Mammary epithelial cell (primary cell): ENCODE measurements at regions of chr12 and their contacts with region 1.

Region 1: DNA sequence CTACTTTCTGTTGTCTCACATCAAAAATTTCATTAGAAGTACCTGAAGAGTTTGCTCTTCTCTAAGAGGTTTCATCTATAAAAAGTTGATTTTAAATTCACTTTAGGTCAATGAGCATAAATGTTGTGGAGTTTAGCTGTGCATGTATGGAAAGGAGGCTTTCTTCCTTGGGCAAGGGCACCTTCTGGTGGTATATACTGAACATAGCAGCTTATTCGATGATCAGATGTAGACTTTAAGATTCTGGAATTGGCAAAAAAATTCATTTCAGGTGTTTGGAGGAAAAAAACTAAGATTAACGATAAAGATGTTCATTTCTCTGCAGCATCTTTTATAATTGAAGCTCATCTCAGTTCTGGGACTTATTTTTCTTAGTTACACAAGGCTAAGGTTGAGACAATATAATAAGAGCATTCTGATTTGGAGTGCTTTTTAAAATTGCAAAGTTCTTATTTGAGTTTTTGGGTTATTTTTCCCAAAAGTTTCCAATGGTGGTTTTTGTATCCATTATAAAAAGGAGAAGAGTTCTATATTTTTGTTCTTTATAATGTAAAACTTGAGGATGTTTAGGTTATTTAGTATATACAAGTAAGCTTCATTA is 46.8 kb downstream of the TMEM117 start:
- DNase-seq: peak; percentile 49
- H3K4me3 ChIP-seq: no peak overlapping the region
- H3K27ac ChIP-seq: no peak overlapping the region
- H3K4me1 ChIP-seq: peaks cover 20% of the 10 kb centered on the region
- H3K27me3 ChIP-seq: no peaks in the 10 kb centered on the region
- CTCF ChIP-seq: peak; percentile 91 to 96

Region 2: GRCh38 chr12:43349863-43350262 is 532.8 kb before region 1 on chr12:
- CTCF ChIA-PET with region 1: no interaction called
- dilution Hi-C with region 1: no loop called
- in situ Hi-C with region 1: no loop called
- intact Hi-C with region 1: loop called (anchors 2 kb)
- DNase-seq: no peak
- H3K4me3 ChIP-seq: no peak overlapping the region
- H3K27ac ChIP-seq: no peak overlapping the region
- H3K4me1 ChIP-seq: no peaks in the 10 kb centered on the region
- H3K27me3 ChIP-seq: no peaks in the 10 kb centered on the region
- CTCF ChIP-seq: peak; percentile 36 to 41

Region 3: DNA sequence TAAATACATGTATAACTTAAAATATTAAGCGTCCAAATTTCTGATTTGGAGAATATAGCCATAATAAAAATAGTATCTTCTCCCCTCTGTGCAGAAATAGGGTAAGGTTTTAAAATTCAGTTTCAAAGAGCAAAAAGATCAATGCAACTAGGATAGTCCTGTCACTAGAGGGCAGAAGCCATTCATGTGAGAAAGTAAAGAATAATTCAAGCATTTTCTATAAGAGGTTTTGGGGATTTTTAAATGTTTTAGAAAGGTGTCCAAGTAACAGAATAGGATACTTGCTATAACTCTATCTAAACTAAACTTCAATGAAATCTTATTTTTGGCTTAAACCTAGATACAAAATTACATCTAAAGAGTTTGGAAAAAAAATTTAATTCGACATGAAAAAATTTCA is 381.0 kb before region 1 on chr12:
- CTCF ChIA-PET with region 1: no interaction called
- dilution Hi-C with region 1: no loop called
- in situ Hi-C with region 1: loop called in 1 of 2 experiments (anchors 25 kb)
- intact Hi-C with region 1: loop called (anchors 2 kb)
- DNase-seq: peak; percentile 11
- H3K4me3 ChIP-seq: no peak overlapping the region
- H3K27ac ChIP-seq: no peak overlapping the region
- H3K4me1 ChIP-seq: no peaks in the 10 kb centered on the region
- H3K27me3 ChIP-seq: no peaks in the 10 kb centered on the region
- CTCF ChIP-seq: peak; percentile 34 to 65

Region 4: GRCh38 chr12:43776498-43776897 is 106.2 kb before region 1 on chr12:
- CTCF ChIA-PET with region 1: interaction called, 6 read pairs
- dilution Hi-C with region 1: no loop called
- in situ Hi-C with region 1: loop called in 1 of 2 experiments (anchors 10 kb)
- intact Hi-C with region 1: loop called (anchors 1 kb)
- DNase-seq: peak; percentile 13
- H3K4me3 ChIP-seq: no peak overlapping the region
- H3K27ac ChIP-seq: no peak overlapping the region
- H3K4me1 ChIP-seq: no peaks in the 10 kb centered on the region
- H3K27me3 ChIP-seq: no peaks in the 10 kb centered on the region
- CTCF ChIP-seq: peak; percentile 55 to 62

Region 5: DNA sequence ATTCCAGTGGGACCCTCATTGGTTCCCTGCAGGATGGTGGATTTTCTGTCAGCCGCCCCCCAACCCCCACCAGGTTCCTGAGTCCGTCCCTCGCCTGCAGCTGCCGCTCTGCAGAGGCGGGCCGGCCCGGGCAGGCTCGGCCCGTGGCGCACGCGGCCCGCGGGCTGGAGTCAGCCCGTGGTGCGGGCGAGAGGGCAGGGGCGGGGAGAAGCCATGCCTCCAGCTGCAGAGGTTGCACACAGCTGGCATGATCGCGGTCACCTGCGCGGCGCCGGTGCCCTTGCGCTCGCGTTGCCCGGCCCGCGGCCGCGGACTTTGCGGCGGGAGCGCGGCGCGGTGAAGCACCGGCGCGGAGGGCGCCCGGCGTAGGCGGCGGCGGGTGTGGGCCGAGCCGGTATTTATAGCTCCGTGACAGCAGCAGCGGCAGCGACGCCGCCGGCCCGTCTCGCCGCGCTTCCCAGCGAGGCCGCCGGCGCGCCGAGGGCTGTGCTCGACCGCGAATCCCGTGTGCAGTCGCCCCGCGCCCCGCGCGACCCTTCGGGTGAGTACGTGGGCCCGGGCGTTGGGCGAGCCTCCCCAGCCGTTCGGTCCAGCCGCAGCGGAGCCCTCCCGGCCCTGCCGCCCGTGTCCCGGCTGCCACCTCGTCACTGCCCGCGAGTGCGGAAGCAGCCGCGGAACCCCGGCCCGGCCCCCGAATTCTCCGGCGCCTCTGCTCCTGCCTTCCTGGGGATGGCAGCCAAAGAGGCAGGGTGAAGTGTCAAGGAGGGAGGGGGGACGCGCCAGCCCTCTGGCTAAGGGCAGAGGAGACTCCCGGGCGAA is 46.8 kb before region 1 on chr12 and contains the start of gene TMEM117:
- CTCF ChIA-PET with region 1: no interaction called
- dilution Hi-C with region 1: no loop called
- in situ Hi-C with region 1: no loop called
- intact Hi-C with region 1: loop called (anchors 5 kb)
- DNase-seq: peak; percentile 59
- H3K4me3 ChIP-seq: peak within 1 kb of the TSS; percentile 76 to 89 (median 86)
- H3K27ac ChIP-seq: peak within 1 kb of the TSS; percentile 83
- H3K4me1 ChIP-seq: peaks cover 11% of the 10 kb centered on the region
- H3K27me3 ChIP-seq: no peaks in the 10 kb centered on the region
- CTCF ChIP-seq: no peak
- total RNA-seq, gene TMEM117: 20.8 to 26.5 TPM

Region 6: DNA sequence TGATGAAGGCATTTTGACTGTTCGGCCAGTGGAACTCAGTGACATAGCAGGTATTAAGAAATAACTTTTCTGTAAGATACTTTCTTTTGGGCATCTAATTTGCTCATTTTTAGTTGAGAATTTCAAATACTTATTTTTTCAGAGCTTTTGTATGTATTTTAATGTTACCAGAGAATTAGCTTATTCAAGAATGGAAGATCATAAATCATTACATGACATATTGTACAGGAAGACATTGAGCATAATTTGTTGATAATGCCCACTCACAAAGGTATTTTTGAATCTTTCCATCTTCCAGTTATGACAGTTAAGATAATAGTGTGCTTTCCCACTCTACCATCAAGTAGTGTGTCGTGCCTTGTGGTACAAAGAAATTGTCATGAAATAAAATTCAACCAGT is 10.3 kb before region 1 on chr12:
- CTCF ChIA-PET with region 1: no interaction called
- dilution Hi-C with region 1: no loop called
- in situ Hi-C with region 1: no loop called
- intact Hi-C with region 1: loop called (anchors 1 kb)
- DNase-seq: no peak
- H3K4me3 ChIP-seq: no peak overlapping the region
- H3K27ac ChIP-seq: no peak overlapping the region
- H3K4me1 ChIP-seq: no peaks in the 10 kb centered on the region
- H3K27me3 ChIP-seq: no peaks in the 10 kb centered on the region
- CTCF ChIP-seq: no peak

Region 7: DNA sequence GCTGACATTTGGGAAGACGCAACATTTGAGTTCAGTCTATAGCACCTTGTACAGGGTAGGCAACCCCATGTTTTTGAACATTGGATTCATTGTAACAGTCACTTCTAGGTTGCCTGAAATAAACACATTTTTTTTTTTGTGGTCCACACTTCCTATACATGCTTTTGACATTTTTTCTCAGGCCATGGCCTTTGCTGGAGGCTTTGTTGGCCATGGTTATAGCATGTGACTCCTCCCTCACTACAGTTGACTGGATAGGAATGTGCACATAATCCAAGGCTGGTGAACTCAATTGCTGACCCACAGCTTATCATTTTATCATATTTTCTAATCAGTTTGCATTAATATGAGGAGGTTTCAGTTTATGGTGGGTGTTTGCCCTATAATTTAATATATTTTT is 13.8 kb after region 1 on chr12:
- CTCF ChIA-PET with region 1: no interaction called
- dilution Hi-C with region 1: no loop called
- in situ Hi-C with region 1: no loop called
- intact Hi-C with region 1: no loop called
- DNase-seq: no peak
- H3K4me3 ChIP-seq: no peak overlapping the region
- H3K27ac ChIP-seq: no peak overlapping the region
- H3K4me1 ChIP-seq: peaks cover 7% of the 10 kb centered on the region
- H3K27me3 ChIP-seq: no peaks in the 10 kb centered on the region
- CTCF ChIP-seq: no peak